ENCODE measurements at regions of chr3 and their contacts with region 1.

Region 1: DNA sequence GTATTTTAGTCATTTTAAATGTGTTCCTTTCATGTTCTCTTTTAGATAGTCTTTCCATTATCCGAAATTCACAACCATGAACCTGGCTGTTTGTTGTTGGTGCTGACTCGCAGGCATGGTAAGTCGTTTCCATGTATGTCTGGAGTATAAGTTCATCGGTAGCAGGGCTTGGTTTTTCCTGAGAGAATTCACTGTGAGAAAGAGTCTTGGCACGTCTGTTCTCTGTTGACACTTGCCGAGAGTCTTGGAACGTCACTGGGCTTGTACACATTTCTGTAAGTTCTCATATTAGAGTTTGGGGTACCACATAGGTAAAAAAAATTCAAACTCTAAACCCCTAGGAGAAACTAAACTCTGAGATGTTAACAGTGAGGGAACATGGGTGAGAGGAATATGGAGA is 29.4 kb upstream of the EIF4A2 start:
- DNase-seq: no peak
- H3K4me3 Mint-ChIP-seq: peak overlapping the region; percentile 69
- H3K27ac Mint-ChIP-seq: peak overlapping the region; percentile 99
- H3K4me1 Mint-ChIP-seq: peaks cover 37% of the 10 kb centered on the region
- H3K27me3 Mint-ChIP-seq: no peaks in the 10 kb centered on the region
- CTCF ChIP-seq: no peak

Region 2: GRCh38 chr3:186589121-186589520 is 164.9 kb before region 1 on chr3:
- CTCF ChIA-PET with region 1: interaction called, 5 read pairs
- intact Hi-C with region 1: loop called (anchors 1 kb)
- DNase-seq: peak; percentile 44
- H3K4me3 Mint-ChIP-seq: no peak overlapping the region
- H3K27ac Mint-ChIP-seq: peak overlapping the region; percentile 64
- H3K4me1 Mint-ChIP-seq: peaks cover 45% of the 10 kb centered on the region
- H3K27me3 Mint-ChIP-seq: no peaks in the 10 kb centered on the region
- CTCF ChIP-seq: peak; percentile 63

Region 3: GRCh38 chr3:186722456-186722855 is 31.6 kb before region 1 on chr3:
- CTCF ChIA-PET with region 1: interaction called, 4 read pairs
- intact Hi-C with region 1: loop called (anchors 1 kb)
- DNase-seq: peak; percentile 67
- H3K4me3 Mint-ChIP-seq: peak overlapping the region; percentile 23
- H3K27ac Mint-ChIP-seq: peak overlapping the region; percentile 27
- H3K4me1 Mint-ChIP-seq: peaks cover 28% of the 10 kb centered on the region
- H3K27me3 Mint-ChIP-seq: no peaks in the 10 kb centered on the region
- CTCF ChIP-seq: peak; percentile 42

Region 4: DNA sequence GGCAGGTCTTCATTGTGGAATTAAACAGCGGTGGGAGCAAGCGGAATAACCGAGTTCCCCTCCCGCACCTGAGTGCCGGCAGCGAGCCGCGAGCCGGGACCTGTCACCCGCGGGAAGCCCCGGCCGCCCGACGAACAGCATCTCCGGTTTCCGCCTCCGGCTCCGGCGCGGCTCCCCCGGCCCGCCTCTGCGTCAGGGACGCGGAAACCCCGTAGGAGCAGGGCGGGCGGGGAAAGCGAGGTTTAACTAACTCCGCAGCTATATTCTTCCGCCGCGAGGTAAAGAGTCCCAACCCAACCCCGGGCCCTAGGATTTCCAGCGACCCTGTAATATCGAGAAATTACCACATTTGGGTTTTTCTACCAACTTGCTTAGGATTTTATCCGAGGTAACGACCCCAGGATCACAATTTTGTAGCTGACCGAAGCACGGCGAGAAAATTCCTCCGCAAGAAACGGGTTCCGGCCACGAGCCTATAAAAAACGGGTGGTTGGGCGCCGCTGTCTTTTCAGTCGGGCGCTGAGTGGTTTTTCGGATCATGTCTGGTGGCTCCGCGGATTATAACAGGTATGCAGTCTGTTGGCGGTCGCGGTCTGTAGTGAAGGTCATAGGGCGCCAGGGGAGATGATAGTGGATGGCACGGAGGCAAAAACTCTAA is 29.2 kb after region 1 on chr3 and contains the start of gene EIF4A2:
- CTCF ChIA-PET with region 1: interaction called, 3 read pairs
- intact Hi-C with region 1: loop called (anchors 2 kb)
- DNase-seq: peak; percentile 98
- H3K4me3 Mint-ChIP-seq: peak within 1 kb of the TSS; percentile 81
- H3K27ac Mint-ChIP-seq: peak within 1 kb of the TSS; percentile 98
- H3K4me1 Mint-ChIP-seq: peaks cover 40% of the 10 kb centered on the region
- H3K27me3 Mint-ChIP-seq: peaks cover 17% of the 10 kb centered on the region
- CTCF ChIP-seq: no peak
- total RNA-seq, gene EIF4A2: 593 and 650 TPM in 2 replicates

Region 5: DNA sequence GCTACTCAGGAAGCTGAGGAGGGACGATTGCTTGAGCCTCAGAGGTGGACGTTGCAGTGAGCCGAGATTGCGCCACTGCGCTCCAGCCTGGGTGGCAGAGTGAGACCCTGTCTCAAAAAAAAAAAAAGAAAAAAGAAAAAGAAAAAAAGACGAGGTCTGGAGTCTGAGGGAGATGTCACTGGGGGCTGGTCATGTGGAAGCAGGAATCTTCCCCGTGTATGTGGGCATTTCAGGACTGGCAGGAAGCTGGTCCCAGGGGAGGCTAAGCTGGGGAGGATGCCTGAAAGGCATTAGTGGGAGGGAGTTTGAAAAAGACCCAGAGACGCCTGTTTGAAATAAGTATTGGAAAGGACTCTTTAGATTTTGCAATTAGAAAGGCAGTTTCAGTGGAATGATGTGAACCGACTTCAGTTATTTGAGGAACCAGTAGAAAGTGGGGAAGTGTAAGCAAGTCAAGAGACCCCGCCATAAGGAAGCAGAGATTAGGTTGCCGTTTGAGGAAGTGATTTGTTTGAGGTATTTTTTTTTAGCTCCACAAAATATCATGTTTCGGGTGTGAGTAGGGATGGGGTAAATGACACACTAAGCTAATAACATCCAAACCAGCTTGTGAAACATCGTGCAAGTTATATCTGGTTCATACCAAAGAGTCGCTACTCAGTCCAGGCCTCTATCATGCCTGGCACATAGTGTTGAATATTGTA is 231.8 kb after region 1 on chr3:
- CTCF ChIA-PET with region 1: no interaction called
- intact Hi-C with region 1: no loop called
- DNase-seq: no peak
- H3K4me3 Mint-ChIP-seq: no peak overlapping the region
- H3K27ac Mint-ChIP-seq: no peak overlapping the region
- H3K4me1 Mint-ChIP-seq: no peaks in the 10 kb centered on the region
- H3K27me3 Mint-ChIP-seq: peaks cover 17% of the 10 kb centered on the region
- CTCF ChIP-seq: no peak

Measured in Calu3 (cell line).